ENCODE measurements at regions of chr5 and their contacts with region 1.

Region 1: DNA sequence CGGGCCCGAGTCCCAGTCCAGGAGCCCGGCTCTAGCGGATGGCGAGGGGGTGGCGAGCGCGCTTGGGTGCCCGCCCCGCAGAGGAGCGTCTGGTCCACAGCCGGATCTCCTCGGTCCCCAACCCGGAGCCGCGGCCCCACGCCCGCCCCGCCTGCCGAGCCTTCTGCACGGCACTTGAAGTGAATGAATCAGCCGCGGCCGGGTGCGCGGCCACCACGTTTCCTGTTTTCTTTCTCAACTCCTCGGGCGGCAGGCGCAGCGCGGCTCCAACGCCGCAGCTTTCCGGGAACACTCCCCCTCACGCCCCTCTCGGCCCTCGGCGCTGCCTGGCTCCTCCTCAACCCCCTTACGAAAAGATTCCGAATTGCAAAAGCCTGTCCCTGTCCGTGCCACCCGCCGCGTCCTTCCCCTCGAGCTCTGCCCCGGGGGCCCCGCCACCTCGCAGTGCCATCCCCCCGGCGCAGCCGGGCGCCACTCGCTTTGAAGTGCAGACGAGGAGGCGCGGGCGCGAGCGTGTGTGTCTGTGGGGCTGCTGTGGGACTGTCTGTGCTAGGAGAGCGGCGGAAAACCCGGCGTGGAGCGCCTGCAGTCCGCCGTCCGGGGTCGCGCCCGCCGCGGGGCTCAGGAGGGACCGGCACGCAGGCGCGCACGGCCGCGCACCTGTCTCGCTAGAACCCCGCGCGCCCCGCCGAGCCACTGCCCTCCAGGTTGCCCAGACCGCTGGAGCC is 456.6 kb downstream of the RAB3C start:
- DNase-seq: peak; percentile 37
- ATAC-seq: peak; percentile 14
- H3K4me3 ChIP-seq: peak overlapping the region; percentile 66
- H3K27ac ChIP-seq: no peak overlapping the region
- H3K4me1 ChIP-seq: peaks cover 54% of the 10 kb centered on the region
- H3K27me3 ChIP-seq: no peaks in the 10 kb centered on the region
- CTCF ChIP-seq: no peak

Region 2: GRCh38 chr5:59126708-59127573 is 87.5 kb after region 1 on chr5:
- CTCF ChIA-PET with region 1: no interaction called
- POLR2A ChIA-PET with region 1: no interaction called
- intact Hi-C with region 1: loop called (anchors 5 kb)
- DNase-seq: no peak
- ATAC-seq: peak; percentile 26
- H3K4me3 ChIP-seq: peak overlapping the region; percentile 56; the same call in 1 of the 2 replicates
- H3K27ac ChIP-seq: peak overlapping the region; percentile 69
- H3K4me1 ChIP-seq: peaks cover 20% of the 10 kb centered on the region
- H3K27me3 ChIP-seq: no peaks in the 10 kb centered on the region
- CTCF ChIP-seq: no peak

Region 3: GRCh38 chr5:59317023-59317773 is 277.7 kb after region 1 on chr5:
- CTCF ChIA-PET with region 1: no interaction called
- POLR2A ChIA-PET with region 1: no interaction called
- intact Hi-C with region 1: no loop called
- DNase-seq: peak; percentile 17
- ATAC-seq: peak; percentile 81
- H3K4me3 ChIP-seq: no peak overlapping the region
- H3K27ac ChIP-seq: no peak overlapping the region
- H3K4me1 ChIP-seq: no peaks in the 10 kb centered on the region
- H3K27me3 ChIP-seq: no peaks in the 10 kb centered on the region
- CTCF ChIP-seq: no peak

Region 4: GRCh38 chr5:59436364-59437148 is 397.1 kb after region 1 on chr5:
- CTCF ChIA-PET with region 1: no interaction called
- POLR2A ChIA-PET with region 1: no interaction called
- intact Hi-C with region 1: loop called (anchors 10 kb)
- DNase-seq: no peak
- ATAC-seq: no peak
- H3K4me3 ChIP-seq: no peak overlapping the region
- H3K27ac ChIP-seq: no peak overlapping the region
- H3K4me1 ChIP-seq: no peaks in the 10 kb centered on the region
- H3K27me3 ChIP-seq: no peaks in the 10 kb centered on the region
- CTCF ChIP-seq: no peak

Region 5: GRCh38 chr5:59587489-59588337 is 548.3 kb after region 1 on chr5:
- CTCF ChIA-PET with region 1: no interaction called
- POLR2A ChIA-PET with region 1: no interaction called
- intact Hi-C with region 1: loop called (anchors 5 kb)
- DNase-seq: peak; percentile 54
- ATAC-seq: peak; percentile 80
- H3K4me3 ChIP-seq: peak overlapping the region; percentile 63
- H3K27ac ChIP-seq: peak overlapping the region; percentile 54
- H3K4me1 ChIP-seq: peaks cover 33% of the 10 kb centered on the region
- H3K27me3 ChIP-seq: no peaks in the 10 kb centered on the region
- CTCF ChIP-seq: no peak; the same call in 1 of the 2 replicates

Region 6: GRCh38 chr5:59790399-59791125 is 751.1 kb after region 1 on chr5:
- CTCF ChIA-PET with region 1: no interaction called
- POLR2A ChIA-PET with region 1: no interaction called
- intact Hi-C with region 1: loop called (anchors 5 kb)
- DNase-seq: peak; percentile 47
- ATAC-seq: peak; percentile 40
- H3K4me3 ChIP-seq: peak overlapping the region; percentile 36; the same call in 1 of the 2 replicates
- H3K27ac ChIP-seq: peak overlapping the region; percentile 97
- H3K4me1 ChIP-seq: peaks cover 58% of the 10 kb centered on the region
- H3K27me3 ChIP-seq: no peaks in the 10 kb centered on the region
- CTCF ChIP-seq: no peak

Measured in PC-3 (cell line).